Dorsolateral prefrontal cortex (tissue), 120 donors: ENCODE measurements at regions of chr10 and their contacts with region 1.

Region 1: DNA sequence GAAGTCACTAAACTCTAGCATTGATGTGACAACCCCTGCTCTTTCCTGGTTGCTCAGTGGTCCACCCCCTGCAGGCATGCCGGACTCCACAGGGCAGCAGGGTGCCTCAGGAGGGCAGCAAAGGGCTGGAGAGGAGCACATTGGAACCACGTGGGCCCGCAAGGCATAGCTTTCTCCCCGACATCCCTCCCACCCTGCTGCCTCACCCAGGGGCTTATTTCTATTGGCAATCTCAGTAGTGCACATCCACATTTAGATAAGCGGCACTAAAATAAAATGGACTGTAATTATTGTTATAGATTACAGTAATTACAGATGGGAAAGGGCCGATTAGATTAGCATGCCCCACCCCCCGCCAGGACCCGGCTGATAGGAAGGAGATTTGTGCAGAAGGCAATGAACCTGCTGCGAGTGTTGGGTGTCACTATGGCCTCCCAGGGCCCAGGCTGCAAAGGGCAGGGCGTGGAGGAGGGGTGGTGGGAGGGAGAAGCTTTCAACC is 580.1 kb downstream of the GRID1 start:
- DNase-seq: peak in 3 of 10 donors; percentile 24 to 41 (median 30)
- H3K4me3 ChIP-seq: no peak overlapping the region
- H3K27ac ChIP-seq: no peak overlapping the region
- H3K27me3 ChIP-seq: no peaks in the 10 kb centered on the region
- CTCF ChIP-seq: peak in 48 of 56 donors; percentile 16 to 68 (median 44)

Region 2: DNA sequence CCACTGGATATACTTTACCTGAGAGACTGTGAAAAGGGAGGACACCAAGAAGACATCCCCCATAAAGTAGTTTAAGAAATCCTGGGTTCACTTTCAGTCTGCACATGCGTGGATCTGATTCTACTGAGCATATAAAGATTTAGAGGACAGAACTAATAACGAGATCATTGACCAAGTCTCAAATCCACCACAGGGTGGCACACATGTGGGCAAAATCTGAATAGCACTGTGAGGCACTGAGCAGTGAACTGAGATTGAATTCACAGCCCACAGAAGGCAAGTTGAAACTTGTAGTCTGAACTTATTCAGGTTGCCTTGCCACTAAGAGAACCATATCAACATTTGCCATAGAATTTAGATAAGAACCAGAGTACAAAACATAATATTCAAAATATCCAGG is 238.4 kb before region 1 on chr10:
- intact Hi-C with region 1: loop called in 1 of 2 experiments (anchors 10 kb)
- DNase-seq: peak; percentile 7 to 85 (median 54)
- H3K4me3 ChIP-seq: no peak overlapping the region
- H3K27ac ChIP-seq: peak overlapping the region in 1 of 59 donors; percentile 34
- H3K27me3 ChIP-seq: no peaks in the 10 kb centered on the region
- CTCF ChIP-seq: peak in 55 of 56 donors; percentile 52 to 87 (median 72)

Region 3: GRCh38 chr10:85734791-85735190 is 51.7 kb before region 1 on chr10:
- intact Hi-C with region 1: no loop called
- DNase-seq: no peak
- H3K4me3 ChIP-seq: no peak overlapping the region
- H3K27ac ChIP-seq: no peak overlapping the region
- H3K27me3 ChIP-seq: no peaks in the 10 kb centered on the region
- CTCF ChIP-seq: no peak

Region 4: GRCh38 chr10:85961104-85962067 is 174.9 kb after region 1 on chr10:
- intact Hi-C with region 1: no loop called
- DNase-seq: no peak
- H3K4me3 ChIP-seq: no peak overlapping the region
- H3K27ac ChIP-seq: peak overlapping the region in 57 of 59 donors; percentile 4 to 94 (median 76)
- H3K27me3 ChIP-seq: no peaks in the 10 kb centered on the region
- CTCF ChIP-seq: no peak

Region 5: DNA sequence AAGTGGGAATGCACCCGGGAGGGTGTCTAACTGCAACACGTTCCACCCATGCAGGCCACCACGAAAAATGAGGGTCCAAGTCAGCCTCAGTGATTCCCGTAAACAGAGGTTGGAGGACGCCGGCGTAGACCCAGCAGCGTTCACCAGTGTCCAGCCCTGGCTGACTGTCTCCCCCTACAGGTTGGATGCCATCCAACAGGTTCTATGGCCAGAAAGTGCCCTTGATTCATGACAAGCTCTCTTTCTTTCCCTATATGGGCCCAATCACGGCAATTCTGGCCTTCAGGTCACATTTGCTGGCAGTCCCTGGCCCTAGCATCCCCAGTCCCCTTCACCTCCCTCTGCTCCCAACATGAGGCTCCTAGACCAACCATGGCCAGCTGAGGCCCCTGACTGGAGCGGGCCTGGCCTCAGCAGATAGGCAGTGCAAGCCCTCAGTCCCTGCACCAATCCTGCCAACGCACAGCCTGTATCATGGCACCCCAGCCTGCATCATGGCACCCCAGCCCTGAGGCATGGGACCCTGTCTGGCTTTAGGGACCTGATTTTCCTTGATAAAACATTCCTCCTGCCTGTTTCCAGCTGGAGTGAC is 352.7 kb after region 1 on chr10:
- intact Hi-C with region 1: loop called in 1 of 2 experiments (anchors 5 kb)
- DNase-seq: peak in 5 of 10 donors; percentile 39 to 76 (median 48)
- H3K4me3 ChIP-seq: no peak overlapping the region
- H3K27ac ChIP-seq: no peak overlapping the region
- H3K27me3 ChIP-seq: no peaks in the 10 kb centered on the region
- CTCF ChIP-seq: peak in 53 of 56 donors; percentile 16 to 77 (median 55)

Region 6: GRCh38 chr10:86261941-86262687 is 475.7 kb after region 1 on chr10:
- intact Hi-C with region 1: loop called in 1 of 2 experiments (anchors 5 kb)
- DNase-seq: peak in 7 of 10 donors; percentile 2 to 73 (median 55)
- H3K4me3 ChIP-seq: peak overlapping the region in 56 of 59 donors; percentile 0 to 64 (median 36)
- H3K27ac ChIP-seq: peak overlapping the region; percentile 78 to 99 (median 95)
- H3K27me3 ChIP-seq: no peaks in the 10 kb centered on the region
- CTCF ChIP-seq: peak in 51 of 56 donors; percentile 3 to 66 (median 49)

Region 7: GRCh38 chr10:86355571-86356038 is 569.2 kb after region 1 on chr10:
- intact Hi-C with region 1: no loop called
- DNase-seq: peak; percentile 30 to 92 (median 90)
- H3K4me3 ChIP-seq: peak overlapping the region in 12 of 59 donors; percentile 0 to 42 (median 16)
- H3K27ac ChIP-seq: peak overlapping the region; percentile 71 to 99 (median 95)
- H3K27me3 ChIP-seq: no peaks in the 10 kb centered on the region
- CTCF ChIP-seq: peak in 17 of 56 donors; percentile 14 to 54 (median 26)